B cell (primary cell): ENCODE measurements at regions of chr4 and their contacts with region 1.

Region 1: DNA sequence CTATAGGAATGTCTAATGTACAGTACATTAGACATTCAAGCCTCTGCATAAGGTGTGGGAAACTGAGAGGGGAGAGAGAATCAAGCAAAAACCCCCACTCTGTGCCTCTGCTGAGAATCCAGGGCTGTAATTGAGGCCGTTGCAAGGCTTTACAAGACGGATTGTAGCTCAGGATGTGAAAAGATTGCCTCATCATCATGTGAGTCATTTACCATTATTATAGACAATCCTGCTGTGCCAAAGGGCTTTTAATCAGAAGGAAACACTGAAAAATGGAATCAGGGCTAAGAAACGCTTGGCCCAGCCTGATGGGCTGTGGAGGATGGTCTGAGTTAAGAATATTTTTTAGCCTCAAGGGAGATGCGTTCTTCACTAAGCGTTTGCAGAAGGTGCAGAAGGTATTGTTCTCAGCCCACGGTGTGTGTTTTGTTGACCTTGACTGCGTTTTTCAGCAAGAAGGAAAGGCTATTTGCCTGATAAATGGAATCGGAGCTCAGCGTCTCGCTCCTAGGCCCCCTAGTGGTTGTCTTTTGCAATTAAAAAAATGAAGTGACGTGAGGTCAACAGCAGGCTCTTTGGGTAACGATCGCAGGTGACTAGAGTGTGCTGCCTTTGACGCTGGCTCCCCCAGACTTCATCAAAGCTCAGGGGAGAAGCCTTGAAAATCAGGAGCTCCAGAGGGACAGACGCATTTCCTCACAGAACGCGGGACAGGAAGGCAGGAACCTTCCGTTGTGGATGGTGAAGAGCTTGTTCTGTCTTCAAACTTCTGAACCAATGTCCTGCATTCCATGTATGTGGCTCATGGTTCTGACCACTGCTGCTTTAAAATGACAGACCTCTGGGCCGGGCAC is 18.1 kb upstream of the CHRNA9 start:
- DNase-seq: peak; percentile 87
- ATAC-seq: peak; percentile 84
- H3K4me3 ChIP-seq: peak overlapping the region; percentile 25 to 62 (median 58)
- H3K4me3 Mint-ChIP-seq: peak overlapping the region; percentile 83
- H3K27ac ChIP-seq: peak overlapping the region; percentile 57 to 78
- H3K27ac Mint-ChIP-seq: peak overlapping the region; percentile 85
- H3K4me1 ChIP-seq: peaks cover 18 to 20% of the 10 kb centered on the region in 2 donors
- H3K4me1 Mint-ChIP-seq: peaks cover 32% of the 10 kb centered on the region
- H3K27me3 ChIP-seq: no peaks in the 10 kb centered on the region
- H3K27me3 Mint-ChIP-seq: no peaks in the 10 kb centered on the region
- CTCF ChIP-seq: peak; percentile 90

Region 2: GRCh38 chr4:40149960-40150385 is 167.0 kb before region 1 on chr4:
- CTCF ChIA-PET with region 1: interaction called, 134 read pairs
- POLR2A ChIA-PET with region 1: interaction called, 4 read pairs
- intact Hi-C with region 1: loop called (anchors 1 kb)
- DNase-seq: peak; percentile 87
- ATAC-seq: peak; percentile 95
- H3K4me3 ChIP-seq: no peak overlapping the region
- H3K4me3 Mint-ChIP-seq: peak overlapping the region; percentile 27
- H3K27ac ChIP-seq: peak overlapping the region; percentile 20 to 54
- H3K27ac Mint-ChIP-seq: peak overlapping the region; percentile 77
- H3K4me1 ChIP-seq: peaks cover 22 to 32% of the 10 kb centered on the region in 2 donors
- H3K4me1 Mint-ChIP-seq: peaks cover 38% of the 10 kb centered on the region
- H3K27me3 ChIP-seq: no peaks in the 10 kb centered on the region
- H3K27me3 Mint-ChIP-seq: no peaks in the 10 kb centered on the region
- CTCF ChIP-seq: peak; percentile 83

Region 3: DNA sequence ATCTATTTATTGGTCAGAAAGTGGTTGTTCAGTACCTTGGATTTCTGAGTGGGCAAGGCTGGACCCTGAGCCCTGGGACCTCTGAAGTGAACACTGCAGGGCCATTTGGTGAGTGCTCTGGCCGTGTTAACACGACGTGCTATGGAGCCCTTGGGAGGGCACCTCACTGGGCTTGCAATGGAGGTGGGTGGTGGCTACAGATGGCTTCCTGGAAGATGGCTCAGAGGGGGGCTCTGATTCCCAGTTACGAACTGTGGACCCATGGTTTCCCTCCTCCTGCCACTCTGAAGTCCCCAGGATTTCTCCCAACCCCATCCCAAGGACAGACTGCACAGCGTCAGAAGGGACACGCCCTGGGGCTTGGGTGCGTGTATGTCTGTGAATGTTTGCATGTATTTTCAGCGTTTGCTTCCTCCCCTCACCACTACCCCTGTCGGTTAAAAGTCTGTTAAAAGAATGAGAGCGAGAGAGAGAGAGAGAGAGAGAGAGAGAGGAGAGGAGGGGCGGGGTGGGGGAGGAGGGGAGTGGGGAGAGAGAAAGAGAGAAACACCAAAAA is 123.9 kb before region 1 on chr4:
- CTCF ChIA-PET with region 1: interaction called, 93 read pairs
- POLR2A ChIA-PET with region 1: interaction called, 4 read pairs
- intact Hi-C with region 1: no loop called
- DNase-seq: peak; percentile 73
- ATAC-seq: peak; percentile 37
- H3K4me3 ChIP-seq: peak overlapping the region; percentile 45 to 91 (median 60)
- H3K4me3 Mint-ChIP-seq: peak overlapping the region; percentile 96
- H3K27ac ChIP-seq: peak overlapping the region; percentile 93 to 99
- H3K27ac Mint-ChIP-seq: peak overlapping the region; percentile 91
- H3K4me1 ChIP-seq: peaks cover 59 to 79% of the 10 kb centered on the region in 2 donors
- H3K4me1 Mint-ChIP-seq: peaks cover 75% of the 10 kb centered on the region
- H3K27me3 ChIP-seq: no peaks in the 10 kb centered on the region
- H3K27me3 Mint-ChIP-seq: no peaks in the 10 kb centered on the region
- CTCF ChIP-seq: no peak

Region 4: DNA sequence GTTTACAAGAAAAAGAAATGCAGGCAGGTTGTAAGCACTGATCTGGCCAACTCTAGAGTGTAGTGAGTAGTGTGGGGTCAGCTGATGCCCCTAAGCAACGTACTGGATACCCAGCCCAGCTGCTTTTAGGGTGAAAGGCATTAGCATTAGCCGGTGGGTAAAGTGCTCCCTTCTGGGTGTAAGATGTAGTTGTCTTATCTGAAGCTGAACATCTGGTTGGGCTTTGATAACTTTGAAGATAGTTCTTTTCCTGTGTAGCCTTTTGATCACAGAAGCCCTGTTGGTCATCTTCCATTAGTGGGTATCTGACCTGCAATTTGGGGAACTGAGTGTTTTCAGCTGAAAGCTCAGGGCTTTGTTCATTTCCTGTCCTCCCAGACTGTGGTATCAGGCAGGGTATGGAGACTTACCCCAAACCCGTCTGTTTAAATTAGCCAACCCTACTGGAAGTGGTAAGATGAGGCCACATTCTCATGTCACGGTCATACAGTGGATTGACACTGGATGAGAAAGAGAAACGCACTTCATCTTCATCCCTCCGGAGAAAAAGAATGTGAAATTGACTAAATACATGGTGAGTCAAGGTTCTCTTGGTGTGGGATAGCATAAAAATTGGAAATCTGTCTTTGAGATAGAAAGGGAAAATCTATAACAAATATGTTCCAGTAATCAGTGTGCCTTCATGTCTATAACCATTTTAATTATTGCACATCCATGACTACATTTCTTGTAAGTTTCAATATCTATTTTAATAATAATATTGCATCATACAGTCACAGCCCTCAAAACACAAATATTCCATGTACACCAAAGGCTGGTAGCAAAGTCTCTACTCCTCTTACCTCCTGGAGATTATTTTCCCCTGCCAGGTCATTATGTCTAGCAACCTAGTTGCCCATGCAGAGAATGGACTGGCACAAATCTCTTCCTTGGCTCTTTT is 111.5 kb before region 1 on chr4:
- CTCF ChIA-PET with region 1: interaction called, 47 read pairs
- POLR2A ChIA-PET with region 1: no interaction called
- intact Hi-C with region 1: no loop called
- DNase-seq: peak; percentile 66
- ATAC-seq: peak; percentile 46
- H3K4me3 ChIP-seq: peak overlapping the region; percentile 21 to 61 (median 43)
- H3K4me3 Mint-ChIP-seq: peak overlapping the region; percentile 86
- H3K27ac ChIP-seq: peak overlapping the region; percentile 65 to 82
- H3K27ac Mint-ChIP-seq: peak overlapping the region; percentile 88
- H3K4me1 ChIP-seq: peaks cover 83 to 88% of the 10 kb centered on the region in 2 donors
- H3K4me1 Mint-ChIP-seq: peaks cover 87% of the 10 kb centered on the region
- H3K27me3 ChIP-seq: no peaks in the 10 kb centered on the region
- H3K27me3 Mint-ChIP-seq: no peaks in the 10 kb centered on the region
- CTCF ChIP-seq: no peak

Region 5: DNA sequence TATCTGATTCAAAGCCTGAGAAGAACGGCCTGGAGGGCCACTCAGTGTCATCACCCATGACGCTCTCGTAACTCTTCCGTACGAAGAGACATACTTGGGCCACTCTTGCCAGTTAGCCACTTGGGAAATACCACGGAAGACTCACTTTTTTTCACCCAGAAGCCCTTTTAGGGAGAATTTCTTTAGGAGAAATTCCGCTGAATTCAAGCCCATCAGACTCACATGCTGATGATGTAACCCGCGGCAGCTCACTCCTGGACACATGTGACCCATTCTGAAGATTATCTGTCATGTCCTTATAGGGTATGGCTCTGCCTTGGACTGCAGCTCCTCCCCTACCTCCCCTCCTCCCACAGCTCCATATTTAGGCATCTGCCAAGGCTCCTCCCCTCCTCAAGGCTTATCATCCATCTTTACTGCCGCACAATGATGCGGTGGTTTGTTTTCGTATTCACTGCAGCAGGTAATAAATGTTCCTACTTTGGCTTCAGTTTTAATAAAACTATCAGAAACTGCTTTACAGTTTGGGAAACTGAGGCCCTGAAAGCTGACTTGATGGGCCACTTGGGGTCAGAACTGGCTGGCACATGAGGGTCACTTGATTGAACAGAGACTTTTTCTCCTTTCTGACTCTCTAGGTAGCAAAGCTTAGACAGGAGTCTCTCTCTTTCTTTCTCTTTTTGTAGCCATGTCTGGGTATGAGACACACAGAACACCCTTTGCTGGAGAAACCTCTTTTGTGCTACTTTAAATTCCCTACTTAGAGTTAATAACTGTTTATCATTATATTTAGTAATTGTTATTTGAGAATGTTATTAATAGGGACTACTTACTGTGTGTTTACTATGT is 78.1 kb before region 1 on chr4:
- CTCF ChIA-PET with region 1: interaction called, 135 read pairs
- POLR2A ChIA-PET with region 1: no interaction called
- intact Hi-C with region 1: no loop called
- DNase-seq: no peak
- ATAC-seq: peak; percentile 32
- H3K4me3 ChIP-seq: no peak overlapping the region
- H3K4me3 Mint-ChIP-seq: peak overlapping the region; percentile 27
- H3K27ac ChIP-seq: peak overlapping the region; percentile 3 to 60
- H3K27ac Mint-ChIP-seq: peak overlapping the region; percentile 83
- H3K4me1 ChIP-seq: peaks cover 74 to 80% of the 10 kb centered on the region in 2 donors
- H3K4me1 Mint-ChIP-seq: peaks cover 81% of the 10 kb centered on the region
- H3K27me3 ChIP-seq: no peaks in the 10 kb centered on the region
- H3K27me3 Mint-ChIP-seq: no peaks in the 10 kb centered on the region
- CTCF ChIP-seq: no peak

Region 6: GRCh38 chr4:40301603-40302002 is 15.4 kb before region 1 on chr4:
- CTCF ChIA-PET with region 1: interaction called, 13 read pairs
- POLR2A ChIA-PET with region 1: interaction called, 3 read pairs
- intact Hi-C with region 1: loop called (anchors 1 kb)
- DNase-seq: peak; percentile 91
- ATAC-seq: peak; percentile 70
- H3K4me3 ChIP-seq: peak overlapping the region in 2 of 5 experiments; percentile 5 to 51
- H3K4me3 Mint-ChIP-seq: peak overlapping the region; percentile 72
- H3K27ac ChIP-seq: peak overlapping the region; percentile 86 to 90
- H3K27ac Mint-ChIP-seq: peak overlapping the region; percentile 96
- H3K4me1 ChIP-seq: peaks cover 91 to 98% of the 10 kb centered on the region in 2 donors
- H3K4me1 Mint-ChIP-seq: peaks cover 84% of the 10 kb centered on the region
- H3K27me3 ChIP-seq: no peaks in the 10 kb centered on the region
- H3K27me3 Mint-ChIP-seq: no peaks in the 10 kb centered on the region
- CTCF ChIP-seq: no peak